ENCODE measurements at regions of chr19 and their contacts with region 1.

Region 1: DNA sequence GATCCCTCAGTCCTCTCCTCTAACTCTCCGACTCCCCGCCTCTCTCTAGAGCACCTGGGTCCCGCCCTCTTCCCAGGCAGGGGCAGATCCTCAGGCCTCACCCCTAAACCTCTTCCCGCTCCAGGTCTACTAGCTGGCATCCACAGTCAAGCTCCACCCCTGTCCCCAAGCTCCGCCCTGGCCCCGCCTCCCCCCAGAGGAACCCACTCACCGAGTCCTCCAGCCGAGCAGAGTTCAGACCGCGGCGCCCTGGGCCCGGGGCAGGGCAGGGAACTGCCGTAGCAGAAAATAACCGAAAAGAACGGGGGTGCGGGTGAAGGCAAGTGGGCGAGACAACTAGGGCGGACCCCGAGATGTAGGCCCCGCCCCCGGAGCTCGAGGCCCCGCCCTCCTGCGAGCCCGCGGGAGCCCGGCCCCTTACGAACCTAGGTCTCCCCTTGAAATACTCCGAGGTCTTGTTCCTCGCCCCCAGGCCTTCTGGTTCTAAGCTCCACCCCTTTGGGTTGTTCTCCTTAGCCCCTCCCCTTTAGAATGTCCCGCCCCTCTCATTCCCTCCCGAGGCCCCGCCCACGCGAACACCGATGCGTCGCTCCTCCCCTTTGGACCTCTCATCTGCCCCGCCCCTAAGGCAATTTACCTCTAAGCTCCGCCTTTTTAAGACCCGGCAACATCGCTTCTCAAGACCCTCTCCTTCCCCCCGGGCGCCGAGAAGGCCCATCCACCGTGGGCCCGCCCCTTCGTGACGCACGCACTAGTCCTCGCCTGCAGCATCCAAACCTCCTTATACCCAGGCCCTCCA is at the start of gene GGN:
- DNase-seq: peak; percentile 92
- H3K4me3 ChIP-seq: peak within 1 kb of the TSS; percentile 62
- H3K27ac ChIP-seq: peak within 1 kb of the TSS; percentile 23
- H3K4me1 ChIP-seq: peaks cover 9% of the 10 kb centered on the region
- CTCF ChIP-seq: no peak
- total RNA-seq, gene GGN: not detected in 2 replicates

Region 2: DNA sequence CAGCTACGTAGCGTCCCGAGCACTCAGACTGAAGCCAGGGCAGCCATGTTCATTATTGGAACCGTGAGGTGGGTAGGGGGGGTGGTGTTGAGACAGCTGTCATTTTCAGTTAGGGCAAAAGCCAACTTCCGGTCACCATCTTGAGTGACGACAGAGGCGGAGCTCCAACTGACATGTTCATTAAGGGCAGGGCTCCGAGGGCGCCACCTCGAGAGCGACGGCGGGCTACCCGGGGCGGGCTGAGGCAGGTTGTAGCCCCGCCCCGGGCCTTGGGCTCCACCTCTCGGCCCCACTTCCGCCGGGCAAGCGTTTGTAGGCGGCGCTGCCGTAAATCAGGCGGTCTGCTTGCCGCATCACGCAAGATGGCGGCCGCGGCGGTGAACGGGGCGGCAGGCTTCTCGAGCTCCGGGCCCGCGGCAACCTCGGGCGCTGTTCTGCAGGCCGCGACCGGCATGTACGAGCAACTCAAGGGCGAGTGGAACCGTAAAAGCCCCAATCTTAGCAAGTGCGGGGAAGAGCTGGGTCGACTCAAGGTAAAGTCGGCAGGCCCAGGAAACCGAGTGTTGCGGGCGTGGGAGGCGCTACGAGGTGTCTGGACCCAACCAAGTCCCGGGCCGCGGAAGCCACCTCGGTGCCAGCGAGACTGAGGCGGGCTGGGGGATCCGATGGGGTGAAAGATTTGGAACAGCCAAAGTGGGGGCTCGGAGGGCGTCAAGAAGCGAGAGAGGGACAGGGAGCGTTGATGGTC is 13.1 kb before region 1 on chr19 and contains the start of gene PSMD8:
- CTCF ChIA-PET with region 1: interaction called, 3 read pairs
- POLR2A ChIA-PET with region 1: interaction called, 11 read pairs
- intact Hi-C with region 1: loop called (anchors 2 kb)
- DNase-seq: peak; percentile 100
- H3K4me3 ChIP-seq: peak within 1 kb of the TSS; percentile 84
- H3K27ac ChIP-seq: peak within 1 kb of the TSS; percentile 54
- H3K4me1 ChIP-seq: peaks cover 21% of the 10 kb centered on the region
- CTCF ChIP-seq: peak; percentile 56
- total RNA-seq, gene PSMD8: 224 and 238 TPM in 2 replicates

Region 3: GRCh38 chr19:38737921-38738729 is 350.4 kb after region 1 on chr19:
- CTCF ChIA-PET with region 1: interaction called, 10 read pairs
- POLR2A ChIA-PET with region 1: no interaction called
- intact Hi-C with region 1: no loop called
- DNase-seq: no peak
- H3K4me3 ChIP-seq: no peak overlapping the region
- H3K27ac ChIP-seq: no peak overlapping the region
- H3K4me1 ChIP-seq: peaks cover 20% of the 10 kb centered on the region
- CTCF ChIP-seq: no peak

Measured in OCI-LY7 (cell line).